ENCODE measurements at regions of chr13 and their contacts with region 1.

Region 1: GRCh38 chr13:106507560-106508274 is 27.7 kb downstream of the EFNB2 start:
- DNase-seq: no peak

Region 2: DNA sequence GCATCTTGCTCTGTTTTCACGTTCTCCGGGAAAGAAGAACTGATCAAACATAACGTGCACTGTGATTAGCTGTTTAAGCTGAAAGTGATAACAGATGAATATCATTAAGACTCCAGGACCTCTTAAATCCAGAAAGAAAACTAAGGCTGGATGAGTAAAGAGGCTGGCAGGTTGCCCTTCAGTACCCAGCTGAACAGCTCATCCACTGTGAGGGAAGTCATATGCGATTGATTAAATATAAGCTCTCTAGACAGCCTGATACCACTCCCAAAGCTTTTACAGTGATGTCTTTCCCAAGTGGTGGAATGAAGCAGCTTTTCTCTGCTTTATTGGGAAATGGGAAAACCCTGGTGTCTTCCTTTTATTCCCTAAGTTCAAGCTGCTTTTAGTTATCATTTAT is 89.2 kb before region 1 on chr13:
- intact Hi-C with region 1: loop called (anchors 10 kb)
- DNase-seq: no peak

Measured in posterior cingulate gyrus (tissue), 11 donors.